ENCODE measurements at regions of chr1 and their contacts with region 1.

Region 1: GRCh38 chr1:65419681-65420589 is 533 bp upstream of the LEPR start:
- DNase-seq: peak; percentile 98 to 99 (median 99)
- H3K4me3 ChIP-seq: peak overlapping the region; percentile 95
- H3K27ac ChIP-seq: peak overlapping the region; percentile 31 to 96
- H3K4me1 ChIP-seq: peaks cover 16% of the 10 kb centered on the region
- H3K27me3 ChIP-seq: no peaks in the 10 kb centered on the region
- CTCF ChIP-seq: no peak
- EP300 ChIP-seq: no peak
- POLR2A ChIP-seq: peak; percentile 56

Region 2: DNA sequence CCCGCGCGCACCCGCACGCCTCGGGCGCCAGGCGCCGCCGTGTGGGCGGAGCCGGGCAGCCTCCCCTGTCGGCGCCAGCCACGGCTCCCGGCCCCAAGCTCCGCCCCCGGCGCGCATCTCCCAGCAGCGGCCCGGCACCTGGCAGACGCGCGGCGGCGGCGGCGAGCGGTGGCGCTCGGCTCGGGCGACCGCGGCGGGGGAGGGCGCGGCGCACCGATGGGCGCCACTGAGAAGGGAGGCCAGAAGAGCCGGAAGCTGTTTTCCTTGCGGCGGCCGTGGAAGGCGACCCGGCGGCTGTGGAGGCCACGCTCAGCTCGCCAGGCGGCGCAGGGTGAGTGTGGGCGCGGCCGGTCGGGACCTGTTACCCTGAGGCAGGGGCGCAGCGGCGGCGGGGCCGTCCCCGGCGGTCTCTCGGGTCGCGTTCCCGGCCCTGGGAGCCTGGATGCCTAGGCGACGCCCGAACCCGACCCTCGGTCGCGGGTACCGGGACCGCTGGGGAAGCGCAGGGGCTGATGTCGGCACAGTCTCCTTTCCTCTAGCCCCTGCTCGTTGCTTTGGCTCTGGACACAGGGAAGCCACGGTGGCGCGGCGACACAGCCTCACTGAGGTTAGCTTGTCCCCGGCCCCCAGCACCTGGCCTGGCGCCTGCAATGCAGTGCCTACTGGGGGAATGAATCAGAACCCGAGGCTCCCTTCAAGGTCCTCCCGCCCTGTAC is 165.5 kb before region 1 on chr1:
- intact Hi-C with region 1: loop called in 2 of 4 experiments (anchors 10 kb)
- DNase-seq: peak; percentile 64 to 79 (median 74)
- H3K4me3 ChIP-seq: peak overlapping the region; percentile 63
- H3K27ac ChIP-seq: no peak overlapping the region
- H3K4me1 ChIP-seq: peaks cover 4% of the 10 kb centered on the region
- H3K27me3 ChIP-seq: no peaks in the 10 kb centered on the region
- CTCF ChIP-seq: no peak
- EP300 ChIP-seq: no peak
- POLR2A ChIP-seq: no peak